ENCODE measurements at regions of chr9 and their contacts with region 1.

Region 1: DNA sequence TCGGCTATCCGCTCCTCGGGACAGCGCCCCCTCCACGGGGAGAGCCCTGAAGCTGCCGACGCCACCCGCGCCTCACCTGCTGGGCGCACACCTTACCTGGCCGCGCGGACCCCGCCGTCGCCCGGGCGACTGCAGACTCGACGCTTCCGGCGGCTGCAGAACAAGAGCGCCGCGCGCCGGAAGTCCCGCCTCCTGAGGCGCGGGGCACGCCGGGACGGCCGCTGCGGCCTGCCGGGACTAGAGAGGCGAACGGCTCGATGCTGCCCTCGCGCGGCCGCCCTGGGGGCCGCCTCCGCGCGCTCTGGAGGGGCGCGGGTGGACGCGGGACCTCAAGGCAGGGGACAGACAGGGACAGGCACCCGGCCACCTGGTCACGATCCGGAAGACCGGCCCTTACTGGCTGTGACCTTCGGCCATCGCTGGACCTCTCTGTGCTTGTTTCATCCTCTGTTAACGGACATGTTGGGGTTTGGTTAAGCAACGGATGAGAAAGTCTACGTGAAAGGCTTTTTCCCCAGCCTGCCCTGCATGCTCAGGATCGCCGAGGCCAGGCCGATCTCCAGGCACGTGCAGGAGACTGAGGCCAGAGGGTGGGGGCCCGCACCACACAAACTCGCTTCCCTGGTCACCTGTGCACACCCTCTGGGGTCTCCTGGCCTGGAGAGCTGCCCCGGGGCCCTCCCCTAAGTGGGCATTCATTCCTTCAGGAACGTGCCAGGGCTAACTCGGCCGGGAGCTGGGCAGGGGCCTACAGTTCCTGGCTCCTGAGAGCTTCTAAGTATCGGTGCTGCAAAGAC is at the start of gene SNAPC4:
- DNase-seq: peak; percentile 77 to 93 (median 87)
- ATAC-seq: peak; percentile 91
- H3K4me3 ChIP-seq: peak within 1 kb of the TSS; percentile 62
- H3K4me3 Mint-ChIP-seq: peak within 1 kb of the TSS; percentile 83 to 90 (median 86)
- H3K27ac ChIP-seq: peak within 1 kb of the TSS; percentile 62
- H3K27ac Mint-ChIP-seq: peak within 1 kb of the TSS in 8 of 9 donors; percentile 26 to 78 (median 76)
- H3K4me1 ChIP-seq: peaks cover 33 to 38% of the 10 kb centered on the region in 2 donors
- H3K4me1 Mint-ChIP-seq: peaks cover 30 to 61% (median 45%) of the 10 kb centered on the region in 7 donors
- H3K27me3 ChIP-seq: no peaks in the 10 kb centered on the region
- H3K27me3 Mint-ChIP-seq: no peaks in the 10 kb centered on the region
- total RNA-seq, gene SNAPC4: 10.0 to 16.3 (median 12.8) TPM

Region 2: GRCh38 chr9:136283291-136284235 is 116.7 kb before region 1 on chr9:
- CTCF ChIA-PET with region 1: no interaction called
- POLR2A ChIA-PET with region 1: no interaction called
- intact Hi-C with region 1: no loop called
- DNase-seq: peak; percentile 22 to 77 (median 59)
- ATAC-seq: peak; percentile 91
- H3K4me3 ChIP-seq: no peak overlapping the region
- H3K4me3 Mint-ChIP-seq: peak overlapping the region in 4 of 10 donors; percentile 14 to 40 (median 22)
- H3K27ac ChIP-seq: no peak overlapping the region
- H3K27ac Mint-ChIP-seq: no peak overlapping the region
- H3K4me1 ChIP-seq: no peaks in the 10 kb centered on the region
- H3K4me1 Mint-ChIP-seq: peaks cover 0 to 7% (median 0%) of the 10 kb centered on the region in 7 donors
- H3K27me3 ChIP-seq: no peaks in the 10 kb centered on the region
- H3K27me3 Mint-ChIP-seq: peaks cover 0 to 12% (median 0%) of the 10 kb centered on the region in 5 donors

Region 3: DNA sequence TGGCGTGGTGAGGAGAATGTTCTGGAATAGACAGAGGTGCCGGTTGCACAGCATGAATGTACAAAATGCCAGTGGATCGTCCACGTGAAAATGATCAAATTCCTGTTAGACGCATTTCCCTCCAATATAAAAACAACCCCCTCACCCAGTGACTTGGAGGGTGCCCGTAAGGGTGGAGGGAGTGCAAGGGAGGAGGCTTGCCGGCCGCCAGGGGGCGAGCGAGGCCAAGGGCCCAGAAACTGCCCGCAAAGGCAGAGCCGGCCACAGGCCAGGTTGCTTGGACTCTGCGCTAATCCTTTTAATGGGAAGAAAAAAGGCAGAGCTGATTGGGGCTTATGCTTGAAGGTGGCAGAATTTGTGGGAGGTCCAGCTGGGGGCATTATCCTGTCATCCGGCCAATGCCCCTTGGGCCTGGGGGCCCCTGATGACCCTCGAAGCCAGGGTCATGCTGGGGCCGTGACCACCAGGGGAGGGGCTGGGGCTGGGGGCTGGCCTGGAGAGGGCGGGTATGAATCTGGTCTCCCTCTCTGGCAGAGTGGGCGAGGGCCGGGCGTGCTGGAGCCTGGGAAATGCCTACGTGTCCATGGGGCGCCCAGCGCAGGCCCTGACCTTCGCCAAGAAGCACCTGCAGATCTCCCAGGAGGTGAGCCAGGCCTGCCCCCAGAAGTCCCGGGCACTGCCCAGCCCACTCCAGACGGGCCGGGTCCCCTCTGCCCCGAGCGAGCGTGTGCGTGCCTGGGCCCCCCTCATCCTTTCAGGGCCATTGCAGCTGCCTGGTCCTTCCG is 60.9 kb before region 1 on chr9:
- CTCF ChIA-PET with region 1: no interaction called
- POLR2A ChIA-PET with region 1: no interaction called
- intact Hi-C with region 1: loop called in 1 of 2 experiments (anchors 1 kb)
- DNase-seq: peak in 2 of 9 donors; percentile 43 to 51
- ATAC-seq: peak; percentile 56
- H3K4me3 ChIP-seq: no peak overlapping the region
- H3K4me3 Mint-ChIP-seq: no peak overlapping the region
- H3K27ac ChIP-seq: no peak overlapping the region
- H3K27ac Mint-ChIP-seq: no peak overlapping the region
- H3K4me1 ChIP-seq: no peaks in the 10 kb centered on the region
- H3K4me1 Mint-ChIP-seq: no peaks in the 10 kb centered on the region
- H3K27me3 ChIP-seq: no peaks in the 10 kb centered on the region
- H3K27me3 Mint-ChIP-seq: no peaks in the 10 kb centered on the region

Region 4: GRCh38 chr9:136410500-136411287 is 10.5 kb after region 1 on chr9 and contains the starts of genes ENTR1 and PMPCA:
- CTCF ChIA-PET with region 1: interaction called, 12 read pairs
- POLR2A ChIA-PET with region 1: interaction called, 14 read pairs
- intact Hi-C with region 1: loop called (anchors 1 kb)
- DNase-seq: peak; percentile 90 to 99 (median 93)
- ATAC-seq: peak; percentile 94
- H3K4me3 ChIP-seq: peak within 1 kb of the TSS; percentile 96
- H3K4me3 Mint-ChIP-seq: peak within 1 kb of the TSS; percentile 83 to 93 (median 90)
- H3K27ac ChIP-seq: peak within 1 kb of the TSS; percentile 97
- H3K27ac Mint-ChIP-seq: peak within 1 kb of the TSS; percentile 78 to 95 (median 90)
- H3K4me1 ChIP-seq: peaks cover 18 to 26% of the 10 kb centered on the region in 2 donors
- H3K4me1 Mint-ChIP-seq: peaks cover 34 to 56% (median 45%) of the 10 kb centered on the region in 7 donors
- H3K27me3 ChIP-seq: no peaks in the 10 kb centered on the region
- H3K27me3 Mint-ChIP-seq: no peaks in the 10 kb centered on the region
- total RNA-seq, gene ENTR1: 56.3 to 89.0 (median 66.6) TPM
- total RNA-seq, gene PMPCA: 60.5 to 86.3 (median 71.6) TPM

Region 5: DNA sequence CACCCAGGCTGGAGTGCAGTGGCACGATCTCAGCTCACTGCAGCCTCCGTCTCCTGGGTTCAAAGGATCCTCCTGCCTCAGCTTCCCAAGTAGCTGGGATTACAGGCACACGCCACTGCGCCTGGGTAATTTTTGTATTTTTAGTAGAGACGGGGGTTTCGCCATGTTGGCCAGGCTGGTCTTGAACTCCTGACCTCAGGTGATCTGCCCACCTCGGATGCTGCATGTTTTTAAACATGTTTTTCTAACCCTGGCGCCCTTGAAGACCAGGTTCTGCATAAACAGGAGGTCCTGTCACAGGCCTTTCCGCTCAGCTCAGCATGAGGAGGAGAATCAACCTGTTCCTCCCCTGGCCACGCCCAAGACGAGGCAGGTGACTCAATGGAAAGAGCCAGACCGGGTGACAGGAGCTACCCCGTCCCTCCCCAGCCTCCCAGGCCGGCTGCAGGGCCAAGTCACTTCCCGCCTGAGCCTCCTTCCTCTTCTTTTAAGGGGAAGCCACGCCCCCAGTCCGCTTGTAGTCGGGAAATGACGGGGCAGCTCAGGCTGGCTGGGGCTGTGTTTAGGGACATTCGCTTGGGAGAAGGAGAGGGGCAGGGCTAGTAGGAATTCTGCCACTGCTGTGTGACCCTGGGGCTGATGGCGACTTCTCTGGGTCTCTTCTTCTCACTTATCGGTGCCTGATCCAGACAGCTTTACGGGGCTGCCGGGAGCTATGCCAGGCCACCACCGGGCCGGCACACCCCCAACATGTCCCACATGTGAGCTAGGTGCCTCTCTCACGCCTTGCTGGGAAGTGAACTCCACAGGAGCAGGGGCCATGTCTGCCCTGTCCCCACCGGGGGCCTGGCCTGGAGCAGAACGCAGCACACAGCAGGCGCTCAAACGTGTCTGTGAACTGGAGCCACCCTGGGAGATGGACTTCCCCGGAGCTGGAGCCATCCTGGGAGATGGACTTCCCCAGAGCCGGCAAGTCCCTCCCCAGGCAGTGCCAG is 139.5 kb after region 1 on chr9:
- CTCF ChIA-PET with region 1: no interaction called
- POLR2A ChIA-PET with region 1: interaction called, 3 read pairs
- intact Hi-C with region 1: loop called (anchors 10 kb)
- DNase-seq: peak; percentile 50 to 92 (median 80)
- ATAC-seq: peak; percentile 79
- H3K4me3 ChIP-seq: peak overlapping the region; percentile 65
- H3K4me3 Mint-ChIP-seq: peak overlapping the region; percentile 78 to 97 (median 85)
- H3K27ac ChIP-seq: peak overlapping the region; percentile 80
- H3K27ac Mint-ChIP-seq: peak overlapping the region; percentile 90 to 99 (median 99)
- H3K4me1 ChIP-seq: peaks cover 61 to 70% of the 10 kb centered on the region in 2 donors
- H3K4me1 Mint-ChIP-seq: peaks cover 24 to 73% (median 48%) of the 10 kb centered on the region in 7 donors
- H3K27me3 ChIP-seq: no peaks in the 10 kb centered on the region
- H3K27me3 Mint-ChIP-seq: no peaks in the 10 kb centered on the region

Region 6: GRCh38 chr9:136631038-136632000 is 231.1 kb after region 1 on chr9:
- CTCF ChIA-PET with region 1: no interaction called
- POLR2A ChIA-PET with region 1: no interaction called
- intact Hi-C with region 1: loop called in 1 of 2 experiments (anchors 5 kb)
- DNase-seq: peak; percentile 67 to 87 (median 78)
- ATAC-seq: peak; percentile 98
- H3K4me3 ChIP-seq: no peak overlapping the region
- H3K4me3 Mint-ChIP-seq: no peak overlapping the region
- H3K27ac ChIP-seq: no peak overlapping the region
- H3K27ac Mint-ChIP-seq: no peak overlapping the region
- H3K4me1 ChIP-seq: peaks cover 0 to 9% of the 10 kb centered on the region in 2 donors
- H3K4me1 Mint-ChIP-seq: peaks cover 0 to 4% (median 0%) of the 10 kb centered on the region in 7 donors
- H3K27me3 ChIP-seq: no peaks in the 10 kb centered on the region
- H3K27me3 Mint-ChIP-seq: peaks cover 0 to 5% (median 0%) of the 10 kb centered on the region in 5 donors